AG04449 (cell line): ENCODE measurements at regions of chr7 and their contacts with region 1.

Region 1: GRCh38 chr7:2608921-2609411 is 22.8 kb upstream of the TTYH3 start:
- DNase-seq: no peak
- H3K4me3 ChIP-seq: no peak overlapping the region
- CTCF ChIP-seq: peak; percentile 51

Region 2: DNA sequence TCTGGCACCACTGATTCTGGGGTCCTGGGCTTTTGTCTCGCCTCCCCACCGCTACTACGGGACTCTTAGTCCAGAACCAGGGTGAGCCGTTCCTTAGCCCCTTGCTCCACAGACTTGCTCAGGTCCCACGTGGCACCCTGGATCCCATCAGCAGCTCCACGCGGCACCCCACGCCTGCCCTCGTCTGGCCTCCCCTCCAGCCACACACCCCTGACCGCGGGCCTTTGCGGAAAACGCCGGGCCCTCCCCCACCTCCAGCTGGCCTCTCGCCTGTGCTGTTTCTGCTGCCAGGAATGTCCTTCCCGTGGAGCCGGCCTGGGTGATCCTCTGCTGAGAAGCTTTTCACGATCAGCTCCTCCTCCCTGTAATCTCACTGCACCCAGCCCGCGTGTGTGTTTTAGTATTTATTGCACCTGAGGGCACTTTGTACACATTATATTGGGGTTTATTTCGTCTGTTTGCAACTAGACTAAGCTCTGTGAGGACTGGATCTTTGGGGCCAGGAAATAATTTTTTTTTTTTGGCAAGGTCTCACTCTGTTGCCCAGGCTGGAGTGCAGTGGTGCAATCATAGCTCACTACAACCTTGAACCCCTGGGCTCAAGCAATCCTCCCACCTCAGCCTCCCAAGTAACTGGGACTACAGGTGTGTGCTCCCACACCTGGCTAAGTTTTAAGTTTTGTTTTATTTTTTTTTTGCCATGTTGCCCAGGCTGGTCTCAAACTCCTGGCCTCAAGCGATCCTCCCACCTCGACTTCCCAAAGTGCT is 12.3 kb after region 1 on chr7:
- CTCF ChIA-PET with region 1: interaction called, 22 read pairs
- POLR2A ChIA-PET with region 1: interaction called, 3 read pairs
- DNase-seq: no peak
- H3K4me3 ChIP-seq: no peak overlapping the region
- CTCF ChIP-seq: no peak